CD8-positive, alpha-beta T cell (primary cell): ENCODE measurements at regions of chr19 and their contacts with region 1.

Region 1: DNA sequence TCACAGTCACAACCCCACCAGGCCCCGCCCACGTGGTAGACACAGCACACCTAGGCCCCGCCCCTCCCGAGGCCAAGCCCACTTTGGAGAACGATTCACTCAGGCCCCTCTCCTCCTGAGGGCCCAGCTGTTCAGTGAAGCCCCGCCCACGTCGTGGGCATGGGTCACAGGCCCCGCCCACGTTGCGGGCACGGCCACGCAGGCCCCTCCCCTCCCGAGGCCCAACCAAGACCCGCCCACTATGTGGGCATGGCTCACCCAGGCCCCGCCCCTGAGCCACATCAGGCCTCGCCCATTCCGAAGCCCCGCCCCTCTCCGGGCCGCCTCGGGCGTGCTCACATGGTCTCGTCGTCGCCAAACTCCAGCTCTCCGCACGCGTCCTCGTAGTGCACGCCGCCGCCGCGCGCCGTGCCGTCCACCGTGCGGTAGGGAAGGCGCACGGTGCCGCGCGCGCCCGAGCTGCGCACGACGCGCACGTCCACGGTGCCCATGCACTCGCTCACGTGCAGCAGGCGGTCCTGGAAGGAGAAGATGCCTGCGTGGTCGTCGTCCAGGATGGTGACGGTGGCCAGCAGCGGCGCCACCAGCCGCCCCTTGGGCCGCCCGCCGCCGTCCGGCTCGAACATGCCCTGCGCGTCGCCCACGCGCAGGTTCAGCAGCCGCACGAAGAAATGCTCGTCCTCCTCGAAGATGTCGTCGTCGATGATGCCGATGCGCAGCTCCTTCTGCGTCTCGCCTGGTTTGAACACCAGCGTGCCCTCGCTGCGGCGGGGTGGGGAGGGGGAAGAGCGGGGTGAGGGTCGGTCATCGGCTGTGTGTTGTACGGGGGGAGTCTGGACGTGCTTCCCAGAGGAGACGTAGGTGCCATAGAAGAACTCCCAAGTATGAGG is 24.0 kb downstream of the SLC8A2 start:
- DNase-seq: peak in 8 of 9 experiments; percentile 26 to 72 (median 53)
- ATAC-seq: peak; percentile 66
- H3K4me3 ChIP-seq: peak overlapping the region in 1 of 2 experiments; percentile 40
- H3K4me3 Mint-ChIP-seq: peak overlapping the region; percentile 42
- H3K27ac ChIP-seq: no peak overlapping the region
- H3K27ac Mint-ChIP-seq: no peak overlapping the region
- H3K4me1 ChIP-seq: peaks cover 45% of the 10 kb centered on the region
- H3K4me1 Mint-ChIP-seq: peaks cover 48% of the 10 kb centered on the region
- H3K27me3 ChIP-seq: peaks cover 8 to 29% of the 10 kb centered on the region in 2 experiments
- H3K27me3 Mint-ChIP-seq: peaks cover 58% of the 10 kb centered on the region
- CTCF ChIP-seq: no peak

Region 2: DNA sequence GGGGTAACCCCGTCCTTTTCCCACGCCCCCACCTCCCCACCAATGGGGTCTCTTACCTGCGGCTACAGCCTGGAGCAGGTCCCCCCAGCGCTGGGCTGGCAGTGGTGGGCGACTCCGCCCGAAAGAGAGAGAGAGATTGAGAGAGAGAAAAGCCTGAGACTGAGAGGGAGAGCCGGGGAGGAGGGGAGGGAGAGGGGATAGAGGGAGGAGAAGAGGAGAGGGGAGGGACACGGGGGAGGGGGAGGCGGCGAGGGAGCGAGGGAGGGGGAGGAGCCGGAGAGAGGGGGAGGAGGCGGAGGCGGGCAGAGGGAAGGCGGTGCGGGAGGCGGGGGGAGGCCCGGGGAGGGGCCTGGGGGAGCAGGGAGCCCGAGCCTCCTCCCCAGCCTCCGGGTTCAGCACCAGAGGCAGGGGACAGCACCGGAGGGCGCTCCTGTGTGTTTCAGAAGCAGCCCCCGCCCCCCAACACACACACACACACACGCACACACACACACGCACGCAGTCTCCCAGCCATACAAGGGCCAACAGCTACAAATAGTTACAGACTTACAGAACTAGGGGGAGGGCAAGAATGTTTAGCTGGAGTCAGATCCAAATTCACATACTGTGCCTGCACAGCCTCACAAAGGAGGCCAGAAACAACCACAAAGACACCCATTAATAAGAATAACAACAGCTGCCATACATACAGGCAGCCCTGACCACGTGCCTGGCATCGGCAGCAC is 24.2 kb after region 1 on chr19 and contains the start of gene SLC8A2:
- CTCF ChIA-PET with region 1: no interaction called
- POLR2A ChIA-PET with region 1: no interaction called
- intact Hi-C with region 1: loop called in 1 of 2 experiments (anchors 2 kb)
- DNase-seq: peak; percentile 13 to 83 (median 57)
- ATAC-seq: peak; percentile 92
- H3K4me3 ChIP-seq: no peak within 1 kb of the TSS
- H3K4me3 Mint-ChIP-seq: peak within 1 kb of the TSS; percentile 54
- H3K27ac ChIP-seq: no peak within 1 kb of the TSS
- H3K27ac Mint-ChIP-seq: no peak within 1 kb of the TSS
- H3K4me1 ChIP-seq: peaks cover 6% of the 10 kb centered on the region
- H3K4me1 Mint-ChIP-seq: peaks cover 9% of the 10 kb centered on the region
- H3K27me3 ChIP-seq: peaks cover 26 to 42% of the 10 kb centered on the region in 2 experiments
- H3K27me3 Mint-ChIP-seq: peaks cover 43% of the 10 kb centered on the region
- CTCF ChIP-seq: no peak
- total RNA-seq, gene SLC8A2: not detected

Region 3: GRCh38 chr19:47483800-47484690 is 36.3 kb after region 1 on chr19 and contains the start of gene KPTN:
- CTCF ChIA-PET with region 1: interaction called, 3 read pairs
- POLR2A ChIA-PET with region 1: no interaction called
- intact Hi-C with region 1: loop called in 1 of 2 experiments (anchors 2 kb)
- DNase-seq: peak; percentile 76 to 94 (median 87)
- ATAC-seq: peak; percentile 81
- H3K4me3 ChIP-seq: peak within 1 kb of the TSS; percentile 72 to 74
- H3K4me3 Mint-ChIP-seq: peak within 1 kb of the TSS; percentile 98
- H3K27ac ChIP-seq: peak within 1 kb of the TSS; percentile 75 to 94
- H3K27ac Mint-ChIP-seq: peak within 1 kb of the TSS; percentile 98
- H3K4me1 ChIP-seq: peaks cover 38% of the 10 kb centered on the region
- H3K4me1 Mint-ChIP-seq: peaks cover 45% of the 10 kb centered on the region
- H3K27me3 ChIP-seq: no peaks in the 10 kb centered on the region
- H3K27me3 Mint-ChIP-seq: no peaks in the 10 kb centered on the region
- CTCF ChIP-seq: peak; percentile 69
- total RNA-seq, gene KPTN: 5.4 to 5.9 TPM

Region 4: DNA sequence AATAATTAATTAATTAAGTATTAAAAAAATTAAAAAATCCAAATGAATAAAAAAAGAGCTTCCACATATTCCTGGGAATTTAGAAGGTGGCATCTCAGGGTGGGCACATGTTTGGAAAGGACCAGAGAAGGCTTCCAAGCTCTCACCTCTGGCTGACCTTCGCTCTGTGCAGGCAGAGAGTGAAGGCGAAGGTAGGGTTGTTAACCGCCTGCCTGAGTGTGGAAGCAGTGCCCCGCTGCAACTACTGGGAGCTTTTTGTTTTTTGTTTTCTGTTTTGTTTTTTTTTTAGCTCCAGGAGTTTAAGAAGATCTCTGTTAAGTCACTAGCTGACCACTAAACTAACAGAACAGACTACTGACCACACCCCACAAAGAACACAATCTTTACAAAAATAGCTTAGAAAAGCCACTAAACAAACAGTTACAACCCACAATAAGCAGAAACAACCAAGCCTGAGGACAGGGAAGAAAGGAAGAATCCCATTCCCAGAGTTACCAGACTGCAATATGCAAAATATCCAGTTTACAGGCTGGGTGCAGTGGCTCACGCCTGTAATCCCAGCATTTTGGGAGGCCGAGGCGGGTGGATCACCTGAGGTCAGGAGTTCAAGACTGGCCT is 113.8 kb after region 1 on chr19:
- CTCF ChIA-PET with region 1: no interaction called
- POLR2A ChIA-PET with region 1: no interaction called
- intact Hi-C with region 1: no loop called
- DNase-seq: no peak
- ATAC-seq: no peak
- H3K4me3 ChIP-seq: no peak overlapping the region
- H3K4me3 Mint-ChIP-seq: no peak overlapping the region
- H3K27ac ChIP-seq: no peak overlapping the region
- H3K27ac Mint-ChIP-seq: no peak overlapping the region
- H3K4me1 ChIP-seq: no peaks in the 10 kb centered on the region
- H3K4me1 Mint-ChIP-seq: no peaks in the 10 kb centered on the region
- H3K27me3 ChIP-seq: no peaks in the 10 kb centered on the region
- H3K27me3 Mint-ChIP-seq: no peaks in the 10 kb centered on the region
- CTCF ChIP-seq: no peak